ENCODE measurements at regions of chr19 and their contacts with region 1.

Region 1: GRCh38 chr19:1605236-1606137 is at the start of gene UQCR11:
- DNase-seq: peak; percentile 91 to 99 (median 97)

Region 2: DNA sequence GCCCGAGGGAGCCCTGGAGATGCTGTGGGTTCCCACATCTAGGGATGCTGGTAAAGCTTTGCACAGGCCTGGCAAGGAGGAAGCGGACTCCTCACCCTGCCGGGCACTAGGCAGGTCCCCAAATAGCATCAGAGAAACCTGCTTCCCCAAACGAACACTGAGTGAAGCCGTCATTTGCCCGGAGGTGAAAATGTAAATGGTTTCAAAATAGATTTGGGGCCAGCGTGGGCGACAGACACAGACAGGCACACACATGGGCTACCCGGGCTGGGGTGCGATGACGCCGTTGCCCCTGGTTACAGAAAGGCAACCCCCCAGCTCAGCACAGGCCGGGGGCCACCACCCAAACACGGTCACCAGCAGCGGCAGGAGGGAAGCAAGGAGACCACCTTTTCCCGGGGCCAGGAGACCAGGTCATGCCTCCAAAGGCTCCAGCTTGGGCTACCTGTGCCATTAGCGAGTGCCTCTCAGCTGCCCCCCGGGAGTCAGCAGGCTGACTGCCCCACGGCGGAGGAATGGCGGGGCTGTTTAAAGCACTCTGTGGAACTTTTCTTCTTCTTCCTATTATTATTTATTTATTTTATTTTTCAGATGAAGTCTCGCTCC is 269.3 kb before region 1 on chr19:
- intact Hi-C with region 1: no loop called
- DNase-seq: no peak

Region 3: GRCh38 chr19:1568320-1569019 is 37.0 kb before region 1 on chr19 and contains the start of gene MEX3D:
- intact Hi-C with region 1: loop called (anchors 5 kb)
- DNase-seq: peak in 9 of 10 donors; percentile 29 to 94 (median 60)

Region 4: GRCh38 chr19:1592755-1593500 is 12.6 kb before region 1 on chr19 and contains the start of gene MBD3:
- intact Hi-C with region 1: loop called (anchors 1 kb)
- DNase-seq: peak; percentile 85 to 99 (median 94)

Region 5: DNA sequence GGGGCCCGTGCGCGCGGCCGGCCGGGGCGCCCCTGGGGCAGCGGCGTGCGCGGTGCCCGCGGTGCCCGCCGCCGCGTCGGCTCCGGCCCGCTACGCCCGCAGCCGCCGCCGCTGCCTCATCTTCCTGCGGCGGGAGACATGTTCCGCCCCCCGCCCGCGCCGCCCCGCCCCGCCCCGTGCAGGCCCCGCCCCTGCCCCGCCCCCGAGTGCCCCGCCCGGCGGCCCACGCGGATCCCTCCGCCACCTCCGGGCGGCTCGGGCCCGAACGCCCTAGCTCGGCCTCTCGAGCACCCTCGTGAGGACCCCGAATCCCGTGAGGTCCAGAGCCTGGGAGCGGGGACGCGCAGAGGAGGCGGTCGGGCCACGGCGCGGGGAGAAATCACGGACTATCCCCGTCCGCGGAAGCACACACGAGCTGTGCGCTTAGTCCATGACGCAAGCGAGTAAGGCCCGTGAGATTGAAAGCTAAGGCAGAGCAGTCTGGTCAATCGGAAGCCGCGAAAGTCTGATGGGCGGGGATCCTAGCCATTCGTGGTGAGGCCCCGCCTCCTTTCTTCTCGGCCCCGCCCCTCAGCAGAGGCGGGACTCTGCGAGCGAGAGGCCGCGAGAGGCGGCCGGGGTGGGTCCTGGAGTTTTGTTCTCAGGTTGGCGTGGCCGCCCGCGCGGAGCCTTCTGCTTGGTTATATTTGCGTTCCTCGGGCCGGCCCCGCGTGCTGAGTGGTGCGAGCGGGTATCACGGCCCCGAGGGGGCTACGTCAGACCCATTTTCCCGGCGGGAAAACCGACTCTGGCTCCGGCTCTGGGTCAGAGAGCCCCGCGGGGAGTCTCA is 47.2 kb after region 1 on chr19 and contains the start of gene TCF3:
- intact Hi-C with region 1: loop called (anchors 1 kb)
- DNase-seq: peak; percentile 93 to 100 (median 98)